ENCODE measurements at regions of chr5 and their contacts with region 1.

Region 1: DNA sequence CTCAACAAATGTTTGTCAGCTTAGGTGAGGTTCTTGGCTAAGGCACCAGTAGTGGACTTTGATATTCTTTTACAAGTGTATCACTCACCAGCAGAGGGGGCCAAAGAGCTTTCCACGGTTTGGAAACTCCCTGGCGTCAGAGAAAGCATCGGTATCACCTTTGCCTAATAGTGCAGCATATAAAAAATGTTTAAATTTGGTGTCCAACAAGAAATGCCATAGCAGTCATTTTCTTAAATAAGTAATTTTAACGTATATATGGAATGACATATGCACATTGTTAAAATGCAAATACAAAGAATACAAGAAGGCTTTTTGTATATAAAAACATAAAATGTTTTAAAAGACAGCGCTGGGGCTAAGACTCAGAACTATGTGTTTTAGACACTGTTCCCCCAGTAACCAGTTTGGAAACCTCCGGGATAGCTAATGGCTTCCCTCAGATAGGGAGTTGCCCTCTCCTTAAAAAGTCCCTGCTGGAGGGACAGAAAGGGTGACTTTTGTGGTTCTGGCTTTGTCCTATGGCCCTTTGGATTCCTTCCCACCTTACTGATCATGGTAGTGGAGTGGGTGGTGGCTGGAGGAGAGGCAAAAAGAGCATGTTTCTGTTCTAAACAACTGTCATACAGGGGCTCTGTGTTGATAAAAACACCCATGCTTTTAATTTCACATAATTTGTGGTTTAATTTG is 124.6 kb downstream of the GPBP1 start:
- DNase-seq: peak; percentile 82
- ATAC-seq: peak; percentile 75
- H3K4me3 ChIP-seq: no peak overlapping the region
- H3K27ac ChIP-seq: peak overlapping the region; percentile 23; the same call in 1 of the 2 replicates
- H3K4me1 ChIP-seq: peaks cover 21 to 38% of the 10 kb centered on the region in 2 experiments
- H3K27me3 ChIP-seq: no peaks in the 10 kb centered on the region
- CTCF ChIP-seq: peak; percentile 62 to 82 (median 69)
- POLR2A ChIP-seq: no peak
- RAD21 ChIP-seq: peak; percentile 92

Region 2: GRCh38 chr5:57432876-57433275 is 134.4 kb after region 1 on chr5:
- CTCF ChIA-PET with region 1: interaction called, 3 read pairs
- POLR2A ChIA-PET with region 1: no interaction called
- RAD21 ChIA-PET with region 1: no interaction called
- intact Hi-C with region 1: loop called (anchors 1 kb)
- DNase-seq: peak; percentile 23
- ATAC-seq: peak; percentile 67; the same call in 1 of the 2 replicates
- H3K4me3 ChIP-seq: no peak overlapping the region
- H3K27ac ChIP-seq: no peak overlapping the region
- H3K4me1 ChIP-seq: peaks cover 14 to 21% of the 10 kb centered on the region in 2 experiments; a peak in 3 of 4 replicates
- H3K27me3 ChIP-seq: no peaks in the 10 kb centered on the region
- CTCF ChIP-seq: peak; percentile 47 to 58 (median 52); a peak in 5 of 6 replicates
- POLR2A ChIP-seq: no peak
- RAD21 ChIP-seq: peak; percentile 68

Region 3: DNA sequence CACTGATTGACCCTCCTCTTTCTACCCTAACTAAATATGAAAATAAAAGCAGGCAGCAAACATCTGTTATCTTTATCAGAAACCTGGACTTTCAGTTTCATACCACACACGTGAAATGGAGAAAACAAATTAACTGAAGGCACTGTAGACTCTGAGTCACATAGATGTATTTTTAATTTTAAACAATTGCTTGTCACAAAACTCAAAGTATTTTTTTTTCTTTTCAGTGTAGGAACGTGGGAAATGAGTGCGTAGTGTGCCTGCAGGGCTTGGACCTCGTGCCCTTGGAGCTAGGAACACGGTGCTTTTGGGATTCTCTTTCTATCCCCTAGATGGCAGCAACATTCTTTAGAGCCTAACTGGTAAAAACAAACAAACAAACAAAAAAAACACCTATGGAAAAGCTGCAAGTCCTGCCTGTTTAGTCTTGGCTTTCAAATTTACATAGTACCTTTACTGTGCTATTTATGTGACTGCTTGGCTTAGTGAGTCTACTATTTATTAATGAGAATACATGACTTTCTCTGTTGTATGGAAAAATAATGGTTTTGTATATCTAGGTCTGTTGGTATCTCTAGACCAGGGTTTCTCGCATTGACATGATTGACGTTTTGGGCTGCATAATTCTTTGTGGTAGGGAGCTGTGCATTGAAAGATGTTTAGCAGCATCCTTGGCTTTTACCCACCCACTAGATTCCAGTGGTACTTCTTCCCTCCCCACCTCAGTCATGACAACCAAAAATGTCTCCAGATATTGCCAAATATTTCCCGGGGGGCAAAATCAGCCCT is 201.0 kb after region 1 on chr5:
- CTCF ChIA-PET with region 1: interaction called, 16 read pairs
- POLR2A ChIA-PET with region 1: interaction called, 3 read pairs
- RAD21 ChIA-PET with region 1: interaction called in 1 of 2 experiments, 3 read pairs
- intact Hi-C with region 1: loop called (anchors 1 kb)
- DNase-seq: peak; percentile 62
- ATAC-seq: peak; percentile 33
- H3K4me3 ChIP-seq: no peak overlapping the region
- H3K27ac ChIP-seq: no peak overlapping the region
- H3K4me1 ChIP-seq: peaks cover 22 to 43% of the 10 kb centered on the region in 2 experiments
- H3K27me3 ChIP-seq: no peaks in the 10 kb centered on the region
- CTCF ChIP-seq: peak; percentile 61 to 85 (median 63); a peak in 5 of 6 replicates
- POLR2A ChIP-seq: no peak
- RAD21 ChIP-seq: peak; percentile 93

Region 4: GRCh38 chr5:57779383-57780223 is 481.2 kb after region 1 on chr5:
- CTCF ChIA-PET with region 1: interaction called, 20 read pairs
- POLR2A ChIA-PET with region 1: no interaction called
- RAD21 ChIA-PET with region 1: no interaction called
- intact Hi-C with region 1: loop called (anchors 1 kb)
- DNase-seq: peak; percentile 63
- ATAC-seq: peak; percentile 94
- H3K4me3 ChIP-seq: no peak overlapping the region
- H3K27ac ChIP-seq: no peak overlapping the region
- H3K4me1 ChIP-seq: peaks cover 0 to 8% of the 10 kb centered on the region in 2 experiments; a peak in 1 of 4 replicates
- H3K27me3 ChIP-seq: no peaks in the 10 kb centered on the region
- CTCF ChIP-seq: peak; percentile 60 to 81 (median 78); a peak in 5 of 6 replicates
- POLR2A ChIP-seq: no peak
- RAD21 ChIP-seq: peak; percentile 92

Region 5: DNA sequence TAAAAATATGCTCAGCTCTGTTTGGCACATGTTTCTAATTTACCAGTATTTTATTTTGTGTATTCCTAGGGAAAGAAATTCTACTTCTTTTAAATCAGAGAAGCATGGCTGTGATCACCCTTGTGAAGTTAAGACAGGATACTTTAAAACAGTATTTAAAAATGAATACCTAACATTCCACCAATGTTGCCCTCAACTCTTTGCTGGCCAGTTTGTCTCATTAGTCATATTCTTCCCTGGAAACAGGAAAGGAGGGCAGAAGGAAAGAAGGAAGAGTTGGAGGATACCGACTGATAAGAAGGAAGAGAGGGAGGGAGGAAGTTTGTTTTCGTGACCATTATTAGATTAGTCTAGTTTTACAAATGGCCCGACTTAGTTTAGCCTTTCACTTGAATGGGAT is 1024.0 kb after region 1 on chr5:
- CTCF ChIA-PET with region 1: no interaction called
- POLR2A ChIA-PET with region 1: no interaction called
- RAD21 ChIA-PET with region 1: no interaction called
- intact Hi-C with region 1: loop called (anchors 10 kb)
- DNase-seq: no peak
- ATAC-seq: no peak
- H3K4me3 ChIP-seq: no peak overlapping the region
- H3K27ac ChIP-seq: no peak overlapping the region
- H3K4me1 ChIP-seq: peaks cover 0 to 4% of the 10 kb centered on the region in 2 experiments; a peak in 1 of 4 replicates
- H3K27me3 ChIP-seq: no peaks in the 10 kb centered on the region
- CTCF ChIP-seq: no peak
- POLR2A ChIP-seq: no peak
- RAD21 ChIP-seq: no peak

Region 6: DNA sequence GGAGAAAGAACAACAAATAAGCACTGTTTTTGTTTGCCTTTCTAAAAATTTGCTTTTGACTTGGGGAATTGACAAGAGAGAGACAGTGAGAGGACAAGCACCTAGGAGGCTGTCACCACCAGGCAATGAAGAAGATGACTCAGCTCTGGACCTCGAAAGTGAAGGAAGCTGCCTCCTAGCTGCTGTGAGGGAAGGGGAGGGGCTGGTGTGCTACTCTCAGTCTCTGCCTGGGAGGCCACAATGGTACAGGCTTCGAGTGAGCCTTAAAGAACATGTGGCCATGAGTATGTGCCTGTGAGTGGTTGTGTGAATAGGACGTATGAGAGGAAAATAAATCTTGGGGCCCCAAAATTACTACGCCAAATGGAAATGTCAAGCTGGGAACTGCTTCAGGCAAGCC is 1168.5 kb after region 1 on chr5:
- CTCF ChIA-PET with region 1: interaction called, 42 read pairs
- POLR2A ChIA-PET with region 1: no interaction called
- RAD21 ChIA-PET with region 1: no interaction called
- intact Hi-C with region 1: loop called (anchors 1 kb)
- DNase-seq: no peak
- ATAC-seq: peak; percentile 92
- H3K4me3 ChIP-seq: no peak overlapping the region
- H3K27ac ChIP-seq: no peak overlapping the region
- H3K4me1 ChIP-seq: peaks cover 12 to 16% of the 10 kb centered on the region in 2 experiments
- H3K27me3 ChIP-seq: no peaks in the 10 kb centered on the region
- CTCF ChIP-seq: 0 out of 6 replicates have a peak, but pooled peaks of 1 of the 3 experiments have one; percentile 19
- POLR2A ChIP-seq: no peak
- RAD21 ChIP-seq: no peak